Activated naive CD4-positive, alpha-beta T cell treated with anti-CD3 and anti-CD28 coated beads for 36 hours (primary cell): ENCODE measurements at regions of chrX and their contacts with region 1.

Region 1: DNA sequence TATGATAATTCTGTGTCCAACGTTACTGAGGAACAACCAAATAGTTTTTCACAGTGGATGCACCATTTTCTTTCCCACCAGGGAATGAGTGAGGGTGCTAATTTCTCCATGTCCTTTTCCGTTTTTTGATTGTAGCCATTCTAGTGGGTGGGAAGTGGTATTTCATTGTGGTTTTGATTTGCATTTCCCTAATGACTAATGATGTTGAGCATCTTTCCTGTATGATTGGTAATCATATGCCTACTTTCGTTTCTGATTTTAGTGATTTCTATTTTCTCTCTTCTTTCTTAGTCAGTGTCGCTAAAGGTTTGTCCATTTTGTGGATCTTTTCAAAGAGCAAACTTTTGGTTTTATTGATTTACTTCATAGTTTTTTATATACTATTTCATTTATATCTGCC is 32.1 kb upstream of the TEX13D start:
- DNase-seq: no peak
- H3K4me3 Mint-ChIP-seq: no peak overlapping the region
- H3K27ac Mint-ChIP-seq: no peak overlapping the region
- H3K4me1 Mint-ChIP-seq: peaks cover 21% of the 10 kb centered on the region
- H3K27me3 Mint-ChIP-seq: no peaks in the 10 kb centered on the region

Region 2: GRCh38 chrX:124239911-124240310 is 60.5 kb before region 1 on chrX:
- CTCF ChIA-PET with region 1: no interaction called
- intact Hi-C with region 1: loop called (anchors 1 kb)
- DNase-seq: peak; percentile 72
- H3K4me3 Mint-ChIP-seq: peak overlapping the region; percentile 15
- H3K27ac Mint-ChIP-seq: peak overlapping the region; percentile 42
- H3K4me1 Mint-ChIP-seq: peaks cover 40% of the 10 kb centered on the region
- H3K27me3 Mint-ChIP-seq: no peaks in the 10 kb centered on the region

Region 3: GRCh38 chrX:124256216-124256615 is 44.2 kb before region 1 on chrX:
- CTCF ChIA-PET with region 1: no interaction called
- intact Hi-C with region 1: loop called (anchors 5 kb)
- DNase-seq: no peak
- H3K4me3 Mint-ChIP-seq: no peak overlapping the region
- H3K27ac Mint-ChIP-seq: no peak overlapping the region
- H3K4me1 Mint-ChIP-seq: peaks cover 27% of the 10 kb centered on the region
- H3K27me3 Mint-ChIP-seq: no peaks in the 10 kb centered on the region

Region 4: DNA sequence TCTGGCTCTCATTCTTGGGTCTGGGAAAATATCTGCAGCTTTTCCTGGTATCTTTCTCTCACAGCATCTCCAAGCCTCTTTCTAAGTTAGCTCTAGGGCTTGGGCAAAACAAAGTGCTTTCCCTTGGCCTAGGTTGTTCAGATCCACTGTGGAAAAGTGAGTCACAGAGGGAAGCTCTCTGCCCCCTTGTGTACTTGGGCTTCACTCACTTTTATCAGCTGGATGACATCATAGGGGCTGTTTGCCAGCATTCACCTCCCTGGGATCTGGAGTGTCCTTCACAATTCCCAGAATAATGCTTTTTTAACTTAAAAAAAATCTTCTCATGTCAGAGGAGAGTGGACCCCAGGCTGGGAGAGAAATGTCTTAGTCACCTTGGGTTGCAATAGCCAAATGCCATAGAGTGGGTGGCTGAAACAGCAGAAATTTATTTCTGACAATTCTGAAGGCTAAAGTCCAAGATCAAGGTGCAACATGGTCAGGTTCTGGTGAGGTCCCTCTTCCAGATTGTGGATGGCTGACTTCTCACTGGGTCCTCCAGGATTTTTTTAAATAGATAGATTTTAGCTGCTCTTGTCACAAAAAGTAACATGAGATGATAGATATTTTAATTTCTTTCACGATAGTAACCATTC is 293.7 kb after region 1 on chrX:
- CTCF ChIA-PET with region 1: no interaction called
- intact Hi-C with region 1: no loop called
- DNase-seq: no peak
- H3K4me3 Mint-ChIP-seq: no peak overlapping the region
- H3K27ac Mint-ChIP-seq: no peak overlapping the region
- H3K4me1 Mint-ChIP-seq: no peaks in the 10 kb centered on the region
- H3K27me3 Mint-ChIP-seq: no peaks in the 10 kb centered on the region